ENCODE measurements at regions of chr11 and their contacts with region 1.

Region 1: DNA sequence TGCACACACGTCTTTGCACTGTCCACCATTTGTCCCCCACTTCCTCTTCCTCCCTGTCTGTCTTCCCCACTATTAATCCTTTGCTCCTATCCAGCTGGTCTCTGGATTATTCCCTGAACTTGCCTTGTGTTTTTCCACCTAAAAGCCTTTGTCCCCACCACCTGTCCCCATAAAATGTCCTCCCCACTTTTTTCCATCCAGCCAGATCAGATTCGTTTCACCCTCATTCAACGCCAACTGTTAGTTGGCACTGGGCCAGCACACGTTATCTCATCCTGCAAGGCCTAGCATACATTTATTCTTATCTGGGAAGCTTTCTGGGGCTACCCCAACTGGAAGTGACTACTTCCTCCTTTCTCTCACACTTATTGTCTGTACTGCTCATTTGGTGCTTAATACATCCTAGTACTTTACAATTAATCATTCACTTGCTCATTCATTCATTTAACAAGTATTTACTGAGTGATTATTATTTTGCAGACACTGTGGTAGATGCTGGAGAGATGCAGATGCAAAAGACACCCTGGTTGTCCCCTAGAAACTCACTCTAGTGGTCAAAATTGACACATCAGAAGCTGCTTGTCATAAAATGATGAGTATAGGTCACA is 96.2 kb downstream of the RASSF10 start:
- DNase-seq: peak; percentile 21 to 55
- ATAC-seq: no peak
- H3K4me3 ChIP-seq: no peak overlapping the region
- H3K27ac ChIP-seq: no peak overlapping the region
- H3K4me1 ChIP-seq: no peaks in the 10 kb centered on the region
- H3K27me3 ChIP-seq: no peaks in the 10 kb centered on the region
- CTCF ChIP-seq: no peak

Region 2: DNA sequence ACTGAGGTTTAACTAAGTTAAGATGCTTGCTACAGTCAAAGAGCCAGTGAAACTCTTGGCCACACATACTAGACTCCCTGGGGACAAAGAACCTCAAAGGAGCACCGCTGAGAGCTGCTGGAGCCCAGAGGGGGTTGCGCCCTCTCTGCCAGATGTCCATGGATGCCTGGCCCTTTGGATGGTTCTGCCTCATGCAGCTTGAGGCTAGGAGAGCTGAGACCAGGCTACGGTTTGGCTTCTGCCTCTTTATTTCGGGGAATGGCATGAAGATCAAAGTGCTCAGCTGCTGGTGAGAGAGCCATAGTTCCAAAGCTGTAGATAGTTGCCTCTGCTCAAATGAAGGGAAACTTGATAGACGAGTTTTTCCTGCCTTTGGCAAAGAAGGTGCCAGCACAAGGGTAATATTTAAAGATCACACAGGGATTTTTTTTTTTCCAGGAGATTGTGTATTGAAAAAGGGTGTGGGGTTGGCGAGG is 53.2 kb before region 1 on chr11:
- intact Hi-C with region 1: loop called in 1 of 2 experiments (anchors 10 kb)
- DNase-seq: no peak
- ATAC-seq: no peak
- H3K4me3 ChIP-seq: no peak overlapping the region
- H3K27ac ChIP-seq: no peak overlapping the region
- H3K4me1 ChIP-seq: no peaks in the 10 kb centered on the region
- H3K27me3 ChIP-seq: peaks cover 0 to 8% (median 2%) of the 10 kb centered on the region in 3 donors
- CTCF ChIP-seq: no peak